Left ventricle myocardium superior (tissue), 1 donor: ENCODE measurements at regions of chr10 and their contacts with region 1.

Region 1: GRCh38 chr10:72834183-72834825 is 59.2 kb upstream of the OIT3 start:
- DNase-seq: no peak
- ATAC-seq: peak; percentile 77

Region 2: DNA sequence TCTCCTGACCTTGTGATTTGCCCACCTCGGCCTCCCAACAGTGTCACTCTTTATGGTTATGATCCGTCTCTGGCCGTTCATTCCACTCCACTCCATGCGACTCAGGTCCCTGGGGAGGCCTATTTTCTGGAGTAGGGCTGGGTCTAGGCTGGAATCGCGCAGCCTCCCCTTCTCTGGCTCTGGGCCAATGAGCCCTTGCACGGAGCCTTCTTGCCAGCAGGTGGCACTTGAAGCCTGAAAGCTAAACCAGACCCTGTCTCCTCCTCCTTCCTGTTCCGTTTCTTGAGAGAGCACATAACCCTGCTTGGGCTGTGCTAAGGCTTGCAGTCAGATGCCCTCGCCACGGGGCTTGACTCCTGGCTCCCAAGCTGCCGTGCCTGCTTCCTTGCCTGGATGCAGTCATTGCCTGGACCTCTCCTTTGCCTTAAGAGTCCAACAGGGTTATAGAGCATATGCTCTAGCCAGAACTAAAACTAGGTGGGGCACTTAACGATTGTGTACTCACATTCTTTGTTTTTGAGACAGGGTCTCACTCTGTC is 470.0 kb before region 1 on chr10:
- intact Hi-C with region 1: loop called (anchors 10 kb)
- DNase-seq: peak; percentile 91
- ATAC-seq: peak; percentile 96

Region 3: GRCh38 chr10:72649291-72649690 is 185.0 kb before region 1 on chr10:
- intact Hi-C with region 1: no loop called
- DNase-seq: no peak
- ATAC-seq: no peak

Region 4: DNA sequence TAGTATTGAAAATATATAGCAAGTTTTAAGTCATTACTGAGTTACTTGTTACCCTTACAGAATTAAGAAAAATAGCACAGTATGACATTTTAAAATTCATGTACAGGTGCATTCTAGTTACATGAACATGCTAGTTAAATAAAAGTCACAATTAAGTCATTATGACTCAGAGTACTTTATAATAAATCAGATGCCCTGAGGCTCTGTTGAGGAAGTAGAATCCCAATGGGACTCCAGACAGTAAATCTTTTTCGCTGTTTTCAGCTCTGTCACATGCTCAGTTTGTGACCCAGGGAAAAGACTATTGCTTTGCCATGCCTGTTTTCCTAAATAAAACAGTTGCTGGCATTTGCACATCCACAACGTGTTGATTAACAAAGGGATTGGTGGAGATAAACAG is 297.0 kb after region 1 on chr10:
- intact Hi-C with region 1: no loop called
- DNase-seq: no peak
- ATAC-seq: no peak

Region 5: GRCh38 chr10:73485320-73485719 is 651.0 kb after region 1 on chr10:
- intact Hi-C with region 1: no loop called
- DNase-seq: no peak
- ATAC-seq: no peak